Dendritic cell treated with granulocyte-macrophage colony-stimulating factor and Interleukin-4, amounts not matched to agents 40 ng/mL and 50 ng/mL, for 4 days (primary cell): ENCODE measurements at regions of chr2 and their contacts with region 1.

Region 1: DNA sequence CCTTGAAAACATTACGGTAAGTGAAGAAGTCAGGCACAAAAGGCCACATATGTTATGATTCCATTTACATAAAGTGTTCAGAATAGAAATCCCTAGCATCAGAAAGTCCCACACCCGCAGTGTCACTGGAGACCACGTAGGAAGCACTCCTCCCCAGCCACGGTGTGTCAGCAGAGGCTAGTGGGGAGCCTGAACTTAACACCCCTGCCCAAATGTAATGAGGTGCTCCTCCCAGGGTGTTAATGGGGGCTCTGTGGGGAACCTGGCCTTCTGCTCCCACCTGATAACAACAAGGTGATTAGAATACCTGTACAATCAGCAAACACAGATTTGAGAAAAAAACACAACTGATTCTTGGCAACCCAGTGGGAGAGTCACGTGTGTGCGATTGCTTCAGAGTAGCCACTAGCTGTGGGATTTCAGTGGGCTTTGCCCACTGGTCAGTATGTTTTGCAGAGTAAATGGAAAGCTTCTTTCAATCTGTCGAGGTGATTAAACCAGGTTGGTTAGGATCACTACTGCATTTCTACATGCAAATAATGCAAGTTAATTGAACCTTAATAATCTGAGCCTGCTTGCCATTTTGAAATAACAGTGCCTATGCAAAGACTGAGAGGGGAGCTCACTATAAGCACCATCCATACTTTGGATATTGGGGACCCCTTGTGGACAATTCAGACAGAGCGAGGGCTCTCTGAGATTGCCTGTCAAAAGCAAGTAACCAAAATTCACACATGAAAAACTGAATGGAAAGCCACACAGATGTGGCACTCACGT is 20.6 kb upstream of the ATRAID start:
- H3K4me3 Mint-ChIP-seq: no peak overlapping the region
- H3K27ac Mint-ChIP-seq: no peak overlapping the region
- H3K4me1 Mint-ChIP-seq: no peaks in the 10 kb centered on the region
- H3K27me3 Mint-ChIP-seq: peaks cover 3% of the 10 kb centered on the region

Region 2: GRCh38 chr2:26968001-26968400 is 223.2 kb before region 1 on chr2:
- intact Hi-C with region 1: loop called (anchors 10 kb)
- H3K4me3 Mint-ChIP-seq: no peak overlapping the region
- H3K27ac Mint-ChIP-seq: no peak overlapping the region
- H3K4me1 Mint-ChIP-seq: peaks cover 23% of the 10 kb centered on the region
- H3K27me3 Mint-ChIP-seq: peaks cover 27% of the 10 kb centered on the region

Region 3: GRCh38 chr2:27152786-27153510 is 38.3 kb before region 1 on chr2:
- intact Hi-C with region 1: no loop called
- H3K4me3 Mint-ChIP-seq: no peak overlapping the region
- H3K27ac Mint-ChIP-seq: no peak overlapping the region
- H3K4me1 Mint-ChIP-seq: peaks cover 12% of the 10 kb centered on the region
- H3K27me3 Mint-ChIP-seq: peaks cover 3% of the 10 kb centered on the region